Naive thymus-derived CD8-positive, alpha-beta T cell (primary cell): ENCODE measurements at regions of chr1 and their contacts with region 1.

Region 1: DNA sequence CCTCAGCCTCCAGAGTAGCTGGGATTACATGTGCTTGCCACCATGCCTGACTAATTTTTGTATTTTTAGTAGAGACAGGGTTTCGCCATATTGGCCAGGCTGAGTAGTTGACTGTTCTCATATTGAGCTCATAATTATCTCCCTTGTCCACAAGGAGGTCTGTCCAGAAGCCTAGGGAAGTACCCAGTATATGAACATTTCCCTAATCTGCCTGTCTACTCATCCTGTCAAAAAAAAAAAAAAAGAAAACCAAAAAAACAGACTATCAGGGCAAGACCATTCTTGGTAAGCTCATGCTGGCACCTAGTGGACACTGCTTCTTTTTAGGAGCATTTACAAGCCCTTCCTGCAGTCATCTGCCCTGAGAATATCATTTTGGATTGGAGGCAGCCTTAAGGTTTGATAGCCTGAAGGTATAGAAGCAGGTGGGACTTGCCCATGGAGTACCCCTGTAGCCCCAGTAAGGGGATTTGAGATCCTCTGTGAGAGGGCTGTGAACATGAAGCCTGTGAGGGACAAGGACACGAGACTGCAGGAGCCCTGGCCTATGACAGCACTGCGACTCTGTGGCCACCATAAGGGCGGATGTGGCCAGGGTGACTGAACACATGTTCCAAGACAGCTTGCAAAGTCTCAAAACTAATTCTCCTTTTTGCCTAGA is 10.8 kb upstream of the DUSP12 start:
- DNase-seq: peak in 9 of 10 donors; percentile 15 to 79 (median 49)
- ATAC-seq: peak; percentile 74 to 79
- H3K4me3 Mint-ChIP-seq: peak overlapping the region in 7 of 10 donors; percentile 1 to 55 (median 47)
- H3K27ac Mint-ChIP-seq: peak overlapping the region in 6 of 10 donors; percentile 16 to 74 (median 49)
- H3K4me1 Mint-ChIP-seq: peaks cover 4 to 38% (median 16%) of the 10 kb centered on the region in 4 donors
- H3K27me3 Mint-ChIP-seq: no peaks in the 10 kb centered on the region

Region 2: GRCh38 chr1:161749509-161750407 is 11.0 kb after region 1 on chr1 and contains the start of gene DUSP12:
- POLR2A ChIA-PET with region 1: interaction called, 13 read pairs
- DNase-seq: peak; percentile 68 to 91 (median 84)
- ATAC-seq: peak; percentile 97 to 98
- H3K4me3 Mint-ChIP-seq: peak within 1 kb of the TSS; percentile 98 to 100 (median 99)
- H3K27ac Mint-ChIP-seq: peak within 1 kb of the TSS; percentile 96 to 99 (median 97)
- H3K4me1 Mint-ChIP-seq: peaks cover 16 to 50% (median 39%) of the 10 kb centered on the region in 4 donors
- H3K27me3 Mint-ChIP-seq: peaks cover 1 to 10% (median 7%) of the 10 kb centered on the region in 5 donors
- polyA plus RNA-seq, gene DUSP12: 62.7 to 73.1 (median 71.1) TPM